ENCODE measurements at regions of chr1 and their contacts with region 1.

Region 1: DNA sequence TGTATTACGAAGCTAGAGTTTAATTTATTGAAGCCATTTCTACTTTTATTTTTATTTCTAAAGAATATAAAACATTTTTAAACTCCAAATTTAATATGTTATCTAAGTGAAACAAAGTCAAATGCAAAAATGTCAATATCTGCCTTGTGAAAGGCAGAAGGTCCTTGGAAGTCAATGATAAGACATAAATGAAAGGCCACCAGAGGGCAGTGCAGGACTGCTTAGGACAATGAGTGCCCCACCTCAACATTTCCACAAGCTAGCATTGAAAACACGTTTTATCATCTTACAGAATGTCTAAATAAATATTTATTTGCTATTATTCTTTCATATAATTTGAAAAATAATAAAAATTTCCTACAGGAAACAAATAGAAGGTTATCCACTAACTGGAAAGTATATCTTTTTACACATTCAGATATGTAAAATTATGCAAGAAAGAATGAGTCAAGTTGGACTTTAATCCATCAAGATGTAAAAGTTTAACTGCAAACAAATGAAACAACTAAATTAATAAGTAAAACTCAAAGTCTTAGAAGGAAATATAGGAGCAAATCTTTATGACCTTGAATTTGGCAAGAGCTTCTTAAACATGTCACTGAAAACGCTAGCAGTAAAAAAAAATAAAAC is 140.1 kb upstream of the FMN2 start:
- DNase-seq: peak; percentile 59
- ATAC-seq: no peak
- H3K4me3 Mint-ChIP-seq: no peak overlapping the region
- H3K27ac Mint-ChIP-seq: no peak overlapping the region
- H3K4me1 Mint-ChIP-seq: no peaks in the 10 kb centered on the region
- H3K27me3 Mint-ChIP-seq: no peaks in the 10 kb centered on the region

Region 2: DNA sequence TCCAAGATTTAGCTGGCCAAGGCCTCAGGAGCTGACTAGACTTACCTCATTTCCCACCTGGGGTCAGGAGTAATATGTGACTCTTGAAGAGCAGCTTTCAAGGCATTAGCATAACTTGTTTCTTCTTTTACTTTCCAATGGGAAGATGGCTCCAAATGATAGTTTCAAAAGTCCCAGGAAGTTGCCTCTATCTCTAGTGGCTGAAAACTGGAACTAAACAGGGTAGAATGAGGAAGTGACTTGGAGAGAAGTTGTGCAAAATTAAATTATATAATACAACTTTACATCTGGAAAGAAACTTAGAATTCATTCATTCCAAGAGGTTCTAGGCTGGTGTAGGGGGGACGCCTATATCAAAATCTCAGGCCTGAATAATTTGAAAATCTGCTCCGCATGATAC is 110.0 kb before region 1 on chr1:
- CTCF ChIA-PET with region 1: no interaction called
- DNase-seq: no peak
- ATAC-seq: no peak
- H3K4me3 Mint-ChIP-seq: no peak overlapping the region
- H3K27ac Mint-ChIP-seq: no peak overlapping the region
- H3K4me1 Mint-ChIP-seq: no peaks in the 10 kb centered on the region
- H3K27me3 Mint-ChIP-seq: no peaks in the 10 kb centered on the region

Region 3: DNA sequence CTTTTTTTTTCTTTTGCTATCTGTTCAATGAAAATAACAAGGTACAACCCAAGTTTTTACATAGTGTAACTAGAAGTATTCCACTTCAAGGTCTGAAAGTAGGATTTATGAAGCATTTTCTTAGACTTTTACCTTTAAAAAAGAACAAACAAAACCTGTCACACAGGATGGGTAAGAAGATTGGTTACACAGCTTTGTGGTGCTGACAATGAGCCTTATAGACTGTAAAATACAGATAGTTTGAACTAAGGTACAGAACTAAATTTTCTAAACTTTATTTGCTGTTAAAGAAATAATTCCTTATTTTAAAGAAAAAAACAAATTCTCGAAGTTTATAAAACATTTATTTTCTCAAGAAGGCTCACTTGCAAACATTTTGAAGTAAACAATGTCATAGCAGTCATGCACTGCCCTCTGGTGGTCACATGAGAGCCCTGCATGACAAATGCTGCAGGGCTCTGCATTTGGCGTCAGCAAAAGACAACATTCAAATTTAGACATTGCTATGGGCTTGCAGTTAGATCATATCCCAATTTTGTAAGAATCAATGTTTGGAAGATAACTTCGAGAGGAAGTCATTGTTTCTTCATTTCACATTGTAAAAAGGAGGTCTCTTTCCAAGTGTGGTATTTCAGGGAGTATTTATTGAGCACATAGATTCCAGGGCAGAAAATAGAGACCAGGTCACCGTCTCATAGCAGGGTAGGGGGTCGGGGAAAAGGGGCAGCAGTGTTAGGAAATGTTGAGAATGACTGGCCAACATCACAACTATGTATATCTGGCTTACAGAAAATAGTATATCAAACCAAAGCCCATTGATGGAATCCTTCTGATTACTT is 24.7 kb after region 1 on chr1:
- CTCF ChIA-PET with region 1: interaction called, 19 read pairs
- DNase-seq: peak; percentile 62
- ATAC-seq: no peak
- H3K4me3 Mint-ChIP-seq: no peak overlapping the region
- H3K27ac Mint-ChIP-seq: no peak overlapping the region
- H3K4me1 Mint-ChIP-seq: no peaks in the 10 kb centered on the region
- H3K27me3 Mint-ChIP-seq: no peaks in the 10 kb centered on the region

Measured in activated CD8-positive, alpha-beta memory T cell treated with anti-CD3 and anti-CD28 coated beads, Interleukin-2, amount 10 ng/mL, durations not matched to agents 7 days and 5 days (primary cell).